ENCODE measurements at regions of chr11 and their contacts with region 1.

Region 1: GRCh38 chr11:60378354-60378753 is at the start of gene MS4A7:
- DNase-seq: peak; percentile 87
- ATAC-seq: peak; percentile 81
- H3K4me3 ChIP-seq: peak within 1 kb of the TSS; percentile 12 to 58 (median 32)
- H3K4me3 Mint-ChIP-seq: peak within 1 kb of the TSS; percentile 85
- H3K27ac ChIP-seq: peak within 1 kb of the TSS; percentile 93 to 99
- H3K27ac Mint-ChIP-seq: peak within 1 kb of the TSS; percentile 95
- H3K4me1 ChIP-seq: peaks cover 67 to 73% of the 10 kb centered on the region in 2 donors
- H3K4me1 Mint-ChIP-seq: peaks cover 73% of the 10 kb centered on the region
- H3K27me3 ChIP-seq: no peaks in the 10 kb centered on the region
- H3K27me3 Mint-ChIP-seq: no peaks in the 10 kb centered on the region
- CTCF ChIP-seq: no peak
- total RNA-seq, gene MS4A7: 27.2 and 29.1 TPM in 2 replicates

Region 2: DNA sequence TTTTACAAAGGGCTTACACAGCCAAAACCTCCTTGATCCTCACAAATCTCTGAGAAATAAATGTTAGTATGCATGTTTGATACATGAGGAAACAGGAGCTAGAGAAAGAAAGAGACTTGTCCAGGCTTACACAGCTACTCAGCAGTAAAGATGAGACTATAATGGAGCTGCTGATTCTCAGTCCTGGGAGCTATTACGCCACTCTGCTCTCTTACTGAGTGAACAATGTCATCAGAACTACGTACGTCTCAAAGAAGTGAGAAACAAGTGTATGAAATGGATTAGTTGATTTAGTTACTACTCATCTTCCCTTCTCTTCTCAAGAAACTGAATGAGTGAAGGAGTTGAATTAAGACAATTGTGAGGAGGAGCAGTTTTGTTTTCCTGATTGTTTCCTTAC is 39.0 kb before region 1 on chr11:
- CTCF ChIA-PET with region 1: no interaction called
- POLR2A ChIA-PET with region 1: no interaction called
- intact Hi-C with region 1: no loop called
- DNase-seq: no peak
- ATAC-seq: no peak
- H3K4me3 ChIP-seq: no peak overlapping the region
- H3K4me3 Mint-ChIP-seq: no peak overlapping the region
- H3K27ac ChIP-seq: no peak overlapping the region
- H3K27ac Mint-ChIP-seq: no peak overlapping the region
- H3K4me1 ChIP-seq: peaks cover 9 to 12% of the 10 kb centered on the region in 2 donors
- H3K4me1 Mint-ChIP-seq: peaks cover 11% of the 10 kb centered on the region
- H3K27me3 ChIP-seq: no peaks in the 10 kb centered on the region
- H3K27me3 Mint-ChIP-seq: no peaks in the 10 kb centered on the region
- CTCF ChIP-seq: no peak

Region 3: DNA sequence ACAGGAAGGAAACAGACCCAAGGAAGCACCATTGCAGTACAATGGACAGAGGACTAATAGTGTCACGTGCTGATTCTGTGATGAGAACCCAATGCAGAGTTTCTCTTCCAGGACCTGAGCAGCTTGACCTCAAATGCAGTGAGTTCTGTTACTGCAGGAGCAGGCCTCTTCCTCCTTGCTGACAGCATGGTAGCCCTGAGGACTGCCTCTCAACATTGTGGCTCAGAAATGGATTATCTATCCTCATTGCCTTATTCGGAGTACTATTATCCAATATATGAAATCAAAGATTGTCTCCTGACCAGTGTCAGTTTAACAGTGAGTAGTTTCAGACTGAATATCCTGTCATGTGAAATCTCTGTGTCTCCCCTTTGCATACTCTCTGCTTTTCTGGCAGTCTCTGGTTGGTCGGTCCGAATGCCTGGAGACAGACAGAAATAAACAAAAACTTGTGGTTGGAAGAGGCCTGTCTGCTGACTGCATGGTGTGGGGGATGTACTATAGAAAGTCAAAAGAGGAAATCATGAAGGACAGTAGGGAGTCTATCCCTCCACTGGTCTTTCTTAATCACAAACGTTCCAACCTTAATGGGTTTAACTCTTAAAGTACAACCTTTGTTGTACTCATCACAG is 11.0 kb after region 1 on chr11:
- CTCF ChIA-PET with region 1: interaction called, 7 read pairs
- POLR2A ChIA-PET with region 1: interaction called, 3 read pairs
- intact Hi-C with region 1: loop called (anchors 1 kb)
- DNase-seq: peak; percentile 90
- ATAC-seq: peak; percentile 89
- H3K4me3 ChIP-seq: peak overlapping the region in 2 of 5 experiments; percentile 2 to 23
- H3K4me3 Mint-ChIP-seq: peak overlapping the region; percentile 68
- H3K27ac ChIP-seq: peak overlapping the region; percentile 82 to 96
- H3K27ac Mint-ChIP-seq: peak overlapping the region; percentile 93
- H3K4me1 ChIP-seq: peaks cover 34 to 36% of the 10 kb centered on the region in 2 donors
- H3K4me1 Mint-ChIP-seq: peaks cover 50% of the 10 kb centered on the region
- H3K27me3 ChIP-seq: no peaks in the 10 kb centered on the region
- H3K27me3 Mint-ChIP-seq: no peaks in the 10 kb centered on the region
- CTCF ChIP-seq: no peak

Region 4: GRCh38 chr11:60396799-60397198 is 18.4 kb after region 1 on chr11:
- CTCF ChIA-PET with region 1: interaction called, 7 read pairs
- POLR2A ChIA-PET with region 1: no interaction called
- intact Hi-C with region 1: loop called (anchors 2 kb)
- DNase-seq: peak; percentile 80
- ATAC-seq: peak; percentile 92
- H3K4me3 ChIP-seq: peak overlapping the region in 3 of 5 experiments; percentile 7 to 23 (median 16)
- H3K4me3 Mint-ChIP-seq: peak overlapping the region; percentile 70
- H3K27ac ChIP-seq: peak overlapping the region; percentile 74 to 79
- H3K27ac Mint-ChIP-seq: peak overlapping the region; percentile 86
- H3K4me1 ChIP-seq: peaks cover 32 to 41% of the 10 kb centered on the region in 2 donors
- H3K4me1 Mint-ChIP-seq: peaks cover 69% of the 10 kb centered on the region
- H3K27me3 ChIP-seq: no peaks in the 10 kb centered on the region
- H3K27me3 Mint-ChIP-seq: no peaks in the 10 kb centered on the region
- CTCF ChIP-seq: no peak

Region 5: DNA sequence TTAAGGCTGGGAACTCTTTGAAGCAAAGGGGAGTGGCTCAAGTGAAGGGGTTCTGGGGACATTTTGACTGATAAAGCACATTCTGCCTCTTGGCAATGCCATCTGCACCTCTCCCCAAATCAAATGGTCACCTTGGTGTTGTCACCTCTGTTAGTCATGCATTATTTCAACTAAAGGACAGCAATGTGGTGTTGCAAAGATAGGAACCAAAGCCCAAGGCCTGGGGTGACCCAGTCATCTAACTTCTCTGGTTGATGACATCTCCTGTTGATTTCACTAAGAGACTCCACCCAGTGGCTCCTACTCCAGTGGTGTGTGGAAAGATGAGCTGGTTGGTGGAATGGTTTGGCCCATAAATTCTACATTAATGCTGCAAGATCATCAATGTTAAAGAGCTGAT is 69.5 kb after region 1 on chr11:
- CTCF ChIA-PET with region 1: no interaction called
- POLR2A ChIA-PET with region 1: no interaction called
- intact Hi-C with region 1: loop called (anchors 2 kb)
- DNase-seq: no peak
- ATAC-seq: no peak
- H3K4me3 ChIP-seq: no peak overlapping the region
- H3K4me3 Mint-ChIP-seq: no peak overlapping the region
- H3K27ac ChIP-seq: no peak overlapping the region
- H3K27ac Mint-ChIP-seq: peak overlapping the region; percentile 58
- H3K4me1 ChIP-seq: peaks cover 34% of the 10 kb centered on the region in 2 donors
- H3K4me1 Mint-ChIP-seq: peaks cover 59% of the 10 kb centered on the region
- H3K27me3 ChIP-seq: no peaks in the 10 kb centered on the region
- H3K27me3 Mint-ChIP-seq: no peaks in the 10 kb centered on the region
- CTCF ChIP-seq: no peak

Region 6: DNA sequence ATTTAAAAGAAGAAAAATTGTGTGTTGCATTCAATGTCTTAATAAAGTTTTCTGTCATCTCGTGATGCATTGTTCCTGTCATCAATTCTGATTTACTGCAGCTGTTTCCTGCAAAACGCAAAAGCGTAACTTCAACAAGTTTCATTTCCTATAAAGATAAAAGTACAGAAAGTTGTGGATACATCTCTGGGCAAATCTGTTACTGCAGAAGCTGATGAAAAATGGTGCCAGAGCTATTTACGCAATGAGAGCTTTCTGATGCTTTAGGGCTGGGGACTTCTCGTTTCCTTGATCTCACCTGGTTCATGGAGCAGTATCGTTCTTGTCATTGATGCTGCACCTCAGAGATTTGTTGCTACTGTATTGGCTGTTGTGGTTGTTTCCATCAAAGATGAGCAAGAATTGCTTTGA is 98.7 kb after region 1 on chr11:
- CTCF ChIA-PET with region 1: interaction called, 11 read pairs
- POLR2A ChIA-PET with region 1: no interaction called
- intact Hi-C with region 1: no loop called
- DNase-seq: peak; percentile 92
- ATAC-seq: peak; percentile 95
- H3K4me3 ChIP-seq: peak overlapping the region in 1 of 5 experiments; percentile 16
- H3K4me3 Mint-ChIP-seq: peak overlapping the region; percentile 69
- H3K27ac ChIP-seq: peak overlapping the region; percentile 78 to 88
- H3K27ac Mint-ChIP-seq: peak overlapping the region; percentile 78
- H3K4me1 ChIP-seq: peaks cover 43 to 55% of the 10 kb centered on the region in 2 donors
- H3K4me1 Mint-ChIP-seq: peaks cover 66% of the 10 kb centered on the region
- H3K27me3 ChIP-seq: no peaks in the 10 kb centered on the region
- H3K27me3 Mint-ChIP-seq: no peaks in the 10 kb centered on the region
- CTCF ChIP-seq: no peak